ENCODE measurements at regions of chr2 and their contacts with region 1.

Region 1: DNA sequence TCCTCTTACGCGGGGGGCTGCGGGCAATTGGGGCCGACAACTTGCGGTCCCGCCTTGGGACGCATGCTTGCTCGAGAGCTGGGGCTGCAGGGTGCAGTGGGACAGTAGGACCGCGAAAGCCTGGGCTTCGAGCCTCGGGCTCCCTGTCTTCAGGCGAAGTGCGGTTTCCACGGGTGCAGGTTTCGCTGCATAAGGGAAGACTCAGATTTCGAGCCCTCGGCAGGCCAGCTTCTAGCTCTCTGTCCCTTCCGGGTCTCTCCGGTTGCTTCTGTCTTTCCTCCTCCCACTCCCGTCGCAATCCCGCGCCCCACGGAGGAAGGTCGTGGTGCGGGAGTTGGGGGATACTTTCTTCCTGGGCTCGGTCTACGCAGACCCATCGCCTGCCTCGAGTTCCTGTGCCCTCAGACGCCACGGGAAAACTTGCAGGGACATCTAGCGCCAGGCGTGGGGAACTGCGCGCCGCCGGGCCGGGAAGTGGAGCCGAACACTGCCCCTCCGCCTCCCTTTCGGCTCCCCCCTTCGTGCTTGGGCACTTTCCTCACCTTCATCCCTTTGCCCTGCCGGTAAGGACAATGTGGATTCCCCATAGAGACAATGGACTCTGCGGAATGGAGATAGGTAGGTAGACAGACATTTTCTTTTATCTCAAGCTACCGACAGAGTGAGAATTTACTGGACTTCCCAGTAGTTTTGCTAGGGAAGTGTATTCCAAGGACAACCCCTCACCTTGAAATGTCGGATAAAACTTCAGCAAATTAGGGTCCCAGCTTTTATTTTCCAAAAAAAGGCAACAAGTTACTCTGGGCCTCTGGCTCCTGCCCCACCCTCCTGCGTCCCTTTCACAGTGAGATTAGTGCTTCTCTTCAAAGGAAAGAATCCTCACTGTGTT is 4.2 kb upstream of the HOXD13 start:
- DNase-seq: peak in 1 of 2 experiments; percentile 71
- H3K4me3 ChIP-seq: peak overlapping the region; percentile 43
- H3K4me3 Mint-ChIP-seq: peak overlapping the region; percentile 71
- H3K27ac Mint-ChIP-seq: no peak overlapping the region
- H3K4me1 ChIP-seq: peaks cover 18% of the 10 kb centered on the region; the same call in 1 of the 2 replicates
- H3K4me1 Mint-ChIP-seq: peaks cover 12% of the 10 kb centered on the region
- H3K27me3 ChIP-seq: peaks cover 21% of the 10 kb centered on the region
- H3K27me3 Mint-ChIP-seq: peaks cover 52% of the 10 kb centered on the region
- CTCF ChIP-seq: peak; percentile 75 to 82

Region 2: GRCh38 chr2:175366815-175367214 is 721.5 kb before region 1 on chr2:
- CTCF ChIA-PET with region 1: no interaction called
- POLR2A ChIA-PET with region 1: no interaction called
- intact Hi-C with region 1: loop called (anchors 1 kb)
- DNase-seq: peak; percentile 40 to 62
- H3K4me3 ChIP-seq: no peak overlapping the region
- H3K4me3 Mint-ChIP-seq: no peak overlapping the region
- H3K27ac Mint-ChIP-seq: no peak overlapping the region
- H3K4me1 ChIP-seq: no peaks in the 10 kb centered on the region
- H3K4me1 Mint-ChIP-seq: no peaks in the 10 kb centered on the region
- H3K27me3 ChIP-seq: no peaks in the 10 kb centered on the region
- H3K27me3 Mint-ChIP-seq: peaks cover 16% of the 10 kb centered on the region
- CTCF ChIP-seq: peak; percentile 80 to 87

Region 3: DNA sequence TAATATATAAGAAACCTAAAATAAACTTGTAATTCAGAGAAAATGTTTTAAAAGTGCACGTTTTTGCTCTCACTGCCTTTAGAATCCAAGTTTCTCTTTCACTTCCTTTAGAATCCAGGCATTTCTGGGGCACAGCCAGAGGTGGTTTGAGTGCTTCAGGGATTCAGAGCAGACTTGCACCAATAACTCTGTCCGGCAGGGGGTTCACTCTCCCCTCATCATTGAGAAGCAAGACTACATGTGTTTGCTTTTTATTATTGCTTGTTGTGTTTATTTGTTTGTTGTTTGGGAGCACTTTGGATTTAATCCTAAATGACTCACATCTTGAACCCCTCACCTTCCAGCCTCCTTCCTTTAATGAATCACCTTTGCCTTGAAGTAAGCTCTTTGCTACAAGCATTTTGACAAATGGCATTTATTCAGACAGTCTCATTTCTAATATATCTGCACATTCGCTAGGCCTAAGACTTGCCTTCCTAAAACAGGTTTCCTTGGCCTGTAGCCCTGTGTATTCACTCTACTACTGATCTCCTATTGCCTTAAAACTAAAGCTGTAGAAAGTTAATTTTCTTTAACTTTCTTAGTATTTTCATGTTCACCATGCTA is 673.3 kb before region 1 on chr2:
- CTCF ChIA-PET with region 1: no interaction called
- POLR2A ChIA-PET with region 1: no interaction called
- intact Hi-C with region 1: loop called (anchors 2 kb)
- DNase-seq: peak; percentile 52 to 61
- H3K4me3 ChIP-seq: no peak overlapping the region
- H3K4me3 Mint-ChIP-seq: no peak overlapping the region
- H3K27ac Mint-ChIP-seq: no peak overlapping the region
- H3K4me1 ChIP-seq: peaks cover 7% of the 10 kb centered on the region; the same call in 1 of the 2 replicates
- H3K4me1 Mint-ChIP-seq: peaks cover 4% of the 10 kb centered on the region
- H3K27me3 ChIP-seq: no peaks in the 10 kb centered on the region
- H3K27me3 Mint-ChIP-seq: peaks cover 2% of the 10 kb centered on the region
- CTCF ChIP-seq: peak; percentile 78 to 84

Region 4: GRCh38 chr2:175690113-175690837 is 398.0 kb before region 1 on chr2:
- CTCF ChIA-PET with region 1: interaction called, 6 read pairs
- POLR2A ChIA-PET with region 1: no interaction called
- intact Hi-C with region 1: loop called (anchors 1 kb)
- DNase-seq: peak in 1 of 2 experiments; percentile 66
- H3K4me3 ChIP-seq: no peak overlapping the region
- H3K4me3 Mint-ChIP-seq: no peak overlapping the region
- H3K27ac Mint-ChIP-seq: no peak overlapping the region
- H3K4me1 ChIP-seq: no peaks in the 10 kb centered on the region
- H3K4me1 Mint-ChIP-seq: no peaks in the 10 kb centered on the region
- H3K27me3 ChIP-seq: no peaks in the 10 kb centered on the region
- H3K27me3 Mint-ChIP-seq: no peaks in the 10 kb centered on the region
- CTCF ChIP-seq: peak; percentile 74 to 87

Region 5: DNA sequence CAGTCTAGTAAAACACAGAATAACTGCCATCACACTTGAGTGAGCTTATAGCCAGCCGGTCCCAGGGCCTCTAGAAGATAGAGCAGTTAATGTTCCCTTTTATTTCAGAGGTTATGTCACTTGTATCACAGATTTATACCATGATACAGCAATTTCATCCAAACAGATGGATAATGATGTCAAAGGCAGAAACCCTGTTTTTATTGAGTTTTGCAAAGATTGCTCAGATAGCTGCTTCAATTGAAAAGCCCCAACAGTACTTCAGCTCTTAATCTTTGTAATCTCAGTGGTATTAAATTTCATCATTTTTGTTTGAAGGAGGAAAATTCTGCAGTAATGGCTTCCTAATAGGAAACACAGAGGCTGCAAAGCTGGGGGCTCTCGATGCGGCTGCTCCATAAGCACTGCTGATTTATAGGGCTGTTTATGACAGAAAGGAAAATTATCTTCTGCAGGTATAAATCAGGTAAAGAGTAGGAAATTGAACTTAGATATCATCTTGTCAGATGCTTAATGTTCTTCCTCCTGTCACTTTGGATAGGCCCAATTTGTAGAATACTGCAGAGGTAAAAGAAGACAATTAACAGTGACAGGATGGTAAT is 198.5 kb before region 1 on chr2:
- CTCF ChIA-PET with region 1: no interaction called
- POLR2A ChIA-PET with region 1: no interaction called
- intact Hi-C with region 1: loop called (anchors 10 kb)
- DNase-seq: no peak
- H3K4me3 ChIP-seq: no peak overlapping the region
- H3K4me3 Mint-ChIP-seq: no peak overlapping the region
- H3K27ac Mint-ChIP-seq: no peak overlapping the region
- H3K4me1 ChIP-seq: no peaks in the 10 kb centered on the region
- H3K4me1 Mint-ChIP-seq: no peaks in the 10 kb centered on the region
- H3K27me3 ChIP-seq: no peaks in the 10 kb centered on the region
- H3K27me3 Mint-ChIP-seq: peaks cover 30% of the 10 kb centered on the region
- CTCF ChIP-seq: no peak

Region 6: DNA sequence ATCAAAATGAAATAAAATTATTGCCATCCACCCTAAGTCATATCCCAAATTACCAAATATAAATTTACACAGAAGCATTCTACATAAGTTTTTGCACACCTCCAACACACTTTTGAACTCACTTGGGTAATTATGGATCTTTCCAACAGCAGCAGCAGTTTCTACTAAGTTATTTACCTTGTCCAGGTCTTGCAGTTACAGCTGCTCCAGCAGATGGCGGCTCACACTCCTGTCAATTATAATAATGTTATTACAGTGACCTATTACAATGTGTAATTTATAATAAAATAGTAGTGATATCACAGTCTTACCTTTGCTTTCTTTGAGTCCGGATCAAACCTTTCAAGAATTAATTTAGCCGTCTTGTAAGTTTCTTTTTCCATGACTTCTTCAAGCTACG is 124.1 kb before region 1 on chr2:
- CTCF ChIA-PET with region 1: no interaction called
- POLR2A ChIA-PET with region 1: no interaction called
- intact Hi-C with region 1: loop called (anchors 2 kb)
- DNase-seq: peak in 1 of 2 experiments; percentile 27
- H3K4me3 ChIP-seq: no peak overlapping the region
- H3K4me3 Mint-ChIP-seq: no peak overlapping the region
- H3K27ac Mint-ChIP-seq: no peak overlapping the region
- H3K4me1 ChIP-seq: no peaks in the 10 kb centered on the region
- H3K4me1 Mint-ChIP-seq: no peaks in the 10 kb centered on the region
- H3K27me3 ChIP-seq: no peaks in the 10 kb centered on the region
- H3K27me3 Mint-ChIP-seq: no peaks in the 10 kb centered on the region
- CTCF ChIP-seq: peak; percentile 51 to 52

Measured in Caco-2 (cell line).